ENCODE measurements at regions of chr12 and their contacts with region 1.

Region 1: GRCh38 chr12:90042920-90043641 is 334.4 kb upstream of the ATP2B1 start:
- DNase-seq: no peak
- ATAC-seq: no peak
- H3K4me3 ChIP-seq: no peak overlapping the region
- H3K4me3 Mint-ChIP-seq: no peak overlapping the region
- H3K27ac ChIP-seq: no peak overlapping the region
- H3K27ac Mint-ChIP-seq: no peak overlapping the region
- H3K4me1 ChIP-seq: no peaks in the 10 kb centered on the region
- H3K4me1 Mint-ChIP-seq: no peaks in the 10 kb centered on the region
- H3K27me3 ChIP-seq: no peaks in the 10 kb centered on the region
- H3K27me3 Mint-ChIP-seq: no peaks in the 10 kb centered on the region

Region 2: GRCh38 chr12:90235642-90236041 is 192.6 kb after region 1 on chr12:
- CTCF ChIA-PET with region 1: no interaction called
- POLR2A ChIA-PET with region 1: interaction called in 1 of 2 experiments, 10 read pairs
- DNase-seq: no peak
- ATAC-seq: no peak
- H3K4me3 ChIP-seq: no peak overlapping the region
- H3K4me3 Mint-ChIP-seq: no peak overlapping the region
- H3K27ac ChIP-seq: no peak overlapping the region
- H3K27ac Mint-ChIP-seq: no peak overlapping the region
- H3K4me1 ChIP-seq: peaks cover 0 to 2% of the 10 kb centered on the region in 2 experiments
- H3K4me1 Mint-ChIP-seq: peaks cover 0 to 2% (median 2%) of the 10 kb centered on the region in 3 donors
- H3K27me3 ChIP-seq: no peaks in the 10 kb centered on the region
- H3K27me3 Mint-ChIP-seq: peaks cover 12 to 16% of the 10 kb centered on the region in 2 donors